Activated CD4-positive, alpha-beta memory T cell treated with anti-CD3 and anti-CD28 coated beads for 36 hours (primary cell): ENCODE measurements at regions of chr5 and their contacts with region 1.

Region 1: DNA sequence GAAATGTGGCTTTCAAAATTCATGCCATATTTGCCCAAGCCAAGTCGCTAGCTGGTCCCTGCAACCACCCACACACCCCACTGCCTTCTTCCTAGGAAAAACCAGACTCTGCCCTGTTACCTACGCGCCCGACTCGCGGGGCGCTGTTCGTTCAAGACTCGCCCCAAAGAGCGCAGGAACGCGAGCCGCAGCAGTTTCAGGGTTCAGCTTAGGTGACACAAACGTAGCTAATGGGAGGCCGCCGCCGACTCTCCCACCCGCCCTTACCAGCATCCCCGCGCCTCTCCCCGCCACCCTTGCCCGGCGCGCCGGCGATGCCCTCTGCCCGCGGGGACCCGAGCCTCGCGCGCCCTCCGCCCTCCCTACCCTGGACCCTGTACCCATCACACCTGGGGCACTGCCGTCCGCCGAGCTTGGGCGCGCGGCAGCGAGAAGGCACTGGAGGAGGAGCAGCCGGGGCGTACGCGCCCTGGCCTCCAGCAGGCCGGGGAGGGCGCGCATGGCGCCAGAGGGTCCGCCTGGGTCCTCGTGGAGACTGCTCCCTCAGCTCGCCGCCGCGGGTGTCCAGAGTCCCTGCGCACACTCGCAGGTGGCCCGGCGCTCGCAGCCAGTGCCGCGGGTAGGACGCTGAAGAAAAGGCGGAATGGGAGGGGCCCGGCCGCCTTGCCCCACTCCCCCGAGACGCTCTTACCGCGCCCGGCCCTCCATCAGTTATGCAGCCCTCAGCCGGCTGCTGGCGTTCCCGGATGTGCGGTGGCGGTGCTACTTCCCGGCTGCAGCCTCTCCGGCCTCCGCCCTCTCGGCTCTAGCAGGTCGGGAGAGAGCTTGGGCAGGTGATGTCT is at the start of gene EMB:
- DNase-seq: peak; percentile 89
- H3K4me3 Mint-ChIP-seq: peak within 1 kb of the TSS; percentile 92
- H3K27ac Mint-ChIP-seq: peak within 1 kb of the TSS; percentile 98
- H3K4me1 Mint-ChIP-seq: peaks cover 69% of the 10 kb centered on the region
- H3K27me3 Mint-ChIP-seq: no peaks in the 10 kb centered on the region
- total RNA-seq, gene EMB: 87.6 to 90.2 TPM

Region 2: DNA sequence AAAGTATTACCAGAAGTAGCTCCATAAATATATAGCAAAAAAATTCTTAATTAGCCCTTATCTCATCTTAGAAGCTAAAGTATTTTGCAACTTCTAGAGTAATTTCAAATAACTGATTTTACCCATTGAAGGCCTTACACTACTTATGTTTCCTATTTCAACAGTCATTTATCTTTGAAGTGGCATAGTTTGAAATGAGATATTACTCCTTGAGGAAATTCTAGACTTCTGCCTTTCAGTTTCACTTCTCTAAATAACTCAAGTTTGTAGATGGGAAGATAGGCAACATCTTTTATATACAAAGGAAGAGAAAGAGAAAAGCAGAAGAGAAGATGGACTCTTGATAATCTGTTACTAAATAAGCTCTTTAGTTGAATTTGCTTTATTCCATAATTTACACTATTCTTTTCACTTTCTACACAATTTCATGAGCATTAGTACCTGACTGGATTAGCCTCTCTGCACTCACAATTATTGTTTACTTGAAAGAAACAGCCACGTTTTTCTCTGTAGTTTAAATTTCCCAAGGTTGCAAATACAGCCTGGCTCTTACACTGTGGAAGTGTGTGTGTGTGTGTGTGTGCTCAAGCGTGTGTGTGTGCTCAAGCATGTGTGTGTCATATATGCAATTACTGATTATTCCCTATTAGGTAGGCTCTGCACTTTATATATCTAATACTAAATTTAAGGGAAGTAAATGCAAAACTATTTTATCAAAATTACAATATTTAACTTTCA is 60.8 kb after region 1 on chr5:
- CTCF ChIA-PET with region 1: no interaction called
- POLR2A ChIA-PET with region 1: interaction called, 3 read pairs
- intact Hi-C with region 1: loop called (anchors 2 kb)
- DNase-seq: no peak
- H3K4me3 Mint-ChIP-seq: no peak overlapping the region
- H3K27ac Mint-ChIP-seq: no peak overlapping the region
- H3K4me1 Mint-ChIP-seq: peaks cover 12% of the 10 kb centered on the region
- H3K27me3 Mint-ChIP-seq: peaks cover 1% of the 10 kb centered on the region

Region 3: GRCh38 chr5:50667653-50668595 is 227.1 kb after region 1 on chr5:
- CTCF ChIA-PET with region 1: interaction called, 4 read pairs
- POLR2A ChIA-PET with region 1: interaction called, 18 read pairs
- intact Hi-C with region 1: loop called (anchors 2 kb)
- DNase-seq: peak; percentile 90
- H3K4me3 Mint-ChIP-seq: peak overlapping the region; percentile 90
- H3K27ac Mint-ChIP-seq: peak overlapping the region; percentile 98
- H3K4me1 Mint-ChIP-seq: peaks cover 44% of the 10 kb centered on the region
- H3K27me3 Mint-ChIP-seq: no peaks in the 10 kb centered on the region

Region 4: GRCh38 chr5:50711273-50711672 is 270.4 kb after region 1 on chr5:
- CTCF ChIA-PET with region 1: no interaction called
- POLR2A ChIA-PET with region 1: interaction called, 3 read pairs
- intact Hi-C with region 1: loop called (anchors 2 kb)
- DNase-seq: peak; percentile 74
- H3K4me3 Mint-ChIP-seq: peak overlapping the region; percentile 54
- H3K27ac Mint-ChIP-seq: peak overlapping the region; percentile 60
- H3K4me1 Mint-ChIP-seq: peaks cover 81% of the 10 kb centered on the region
- H3K27me3 Mint-ChIP-seq: no peaks in the 10 kb centered on the region